SK-N-SH (cell line): ENCODE measurements at regions of chr2 and their contacts with region 1.

Region 1: GRCh38 chr2:17851731-17852585 is 26.5 kb upstream of the KCNS3 start:
- DNase-seq: peak; percentile 76
- H3K4me3 ChIP-seq: no peak overlapping the region; a peak in 1 of 4 replicates
- H3K27ac ChIP-seq: no peak overlapping the region
- H3K4me1 ChIP-seq: no peaks in the 10 kb centered on the region; a peak in 1 of 4 replicates
- H3K27me3 ChIP-seq: no peaks in the 10 kb centered on the region; the same call in 1 of the 2 replicates
- CTCF ChIP-seq: peak; percentile 95
- EP300 ChIP-seq: no peak
- RAD21 ChIP-seq: peak; percentile 98

Region 2: GRCh38 chr2:16713011-16713423 is 1138.9 kb before region 1 on chr2:
- CTCF ChIA-PET with region 1: no interaction called
- POLR2A ChIA-PET with region 1: no interaction called
- DNase-seq: no peak
- H3K4me3 ChIP-seq: no peak overlapping the region
- H3K27ac ChIP-seq: no peak overlapping the region
- H3K4me1 ChIP-seq: no peaks in the 10 kb centered on the region; a peak in 2 of 4 replicates
- H3K27me3 ChIP-seq: no peaks in the 10 kb centered on the region
- CTCF ChIP-seq: no peak
- EP300 ChIP-seq: no peak
- RAD21 ChIP-seq: no peak

Region 3: DNA sequence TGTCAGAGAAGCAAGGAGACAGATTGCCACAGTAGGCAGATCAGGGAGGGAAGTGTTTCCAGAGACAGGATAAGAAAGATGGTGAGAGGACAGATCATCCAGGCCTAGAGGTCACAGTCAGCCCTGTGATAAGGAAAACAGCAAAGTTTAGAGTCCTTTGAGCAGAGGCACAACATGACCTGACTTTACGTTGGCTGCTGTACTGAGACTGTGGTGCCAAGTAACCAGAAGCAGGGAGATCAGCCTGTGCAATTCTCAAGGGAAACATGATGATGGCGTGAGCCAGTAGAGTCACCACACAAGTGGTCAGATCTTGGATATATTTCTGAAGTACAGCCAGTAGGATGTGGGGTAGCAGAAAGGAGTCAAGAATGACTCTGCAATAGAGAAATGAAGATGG is 142.1 kb before region 1 on chr2:
- CTCF ChIA-PET with region 1: no interaction called
- POLR2A ChIA-PET with region 1: no interaction called
- DNase-seq: no peak
- H3K4me3 ChIP-seq: no peak overlapping the region
- H3K27ac ChIP-seq: no peak overlapping the region
- H3K4me1 ChIP-seq: no peaks in the 10 kb centered on the region; a peak in 1 of 4 replicates
- H3K27me3 ChIP-seq: no peaks in the 10 kb centered on the region
- CTCF ChIP-seq: no peak
- EP300 ChIP-seq: no peak
- RAD21 ChIP-seq: no peak

Region 4: DNA sequence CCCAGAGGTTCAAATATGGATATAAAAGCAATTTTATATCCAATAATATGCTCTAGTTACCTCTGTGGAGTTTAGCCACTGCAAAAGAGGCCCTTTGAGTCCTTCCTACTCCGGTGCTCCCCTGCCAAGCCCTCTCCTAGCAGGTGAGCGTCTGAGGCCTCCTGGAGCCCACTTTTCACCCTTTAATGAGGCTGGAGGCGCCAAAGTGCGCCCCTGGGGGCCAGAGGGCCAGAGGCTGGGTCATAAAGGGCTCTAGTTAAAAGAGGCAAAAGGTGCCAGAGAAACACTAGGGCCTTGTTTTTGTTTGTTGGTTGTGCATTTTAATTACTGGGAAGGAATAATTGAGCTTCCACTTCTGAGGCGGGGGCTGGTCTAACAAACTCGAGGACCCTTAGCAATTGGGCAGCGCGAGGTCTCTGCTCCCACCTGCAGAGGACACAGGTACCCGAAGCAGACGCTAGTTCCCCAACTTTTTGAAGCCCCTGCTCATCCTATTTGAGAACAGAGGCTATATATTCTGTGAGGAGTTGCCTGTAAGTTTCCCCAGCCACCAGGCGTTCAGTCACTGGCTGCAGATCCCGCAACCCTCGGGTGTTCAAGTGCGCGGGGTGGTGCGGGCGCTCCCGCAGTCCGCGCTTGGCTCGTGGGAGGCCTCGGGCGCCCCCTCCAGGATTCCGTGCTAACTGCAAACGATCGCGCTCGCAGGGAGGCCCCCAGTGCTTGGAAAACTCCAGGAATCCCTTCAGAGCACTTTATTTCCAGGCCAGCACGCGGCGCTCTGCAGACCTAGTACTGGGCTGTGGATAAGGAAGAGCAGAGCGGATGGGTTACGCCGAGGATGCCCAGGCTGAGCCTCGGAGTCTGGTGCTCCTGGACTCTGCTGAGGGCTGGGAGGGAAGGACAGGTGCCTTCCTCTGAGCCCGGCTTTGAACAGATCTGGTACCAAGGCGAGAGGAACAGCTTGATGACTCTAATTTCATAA is 21.6 kb before region 1 on chr2:
- CTCF ChIA-PET with region 1: interaction called, 43 read pairs
- POLR2A ChIA-PET with region 1: no interaction called
- DNase-seq: peak; percentile 92
- H3K4me3 ChIP-seq: peak overlapping the region; percentile 43 to 59
- H3K27ac ChIP-seq: no peak overlapping the region
- H3K4me1 ChIP-seq: peaks cover 0 to 10% of the 10 kb centered on the region in 2 experiments; a peak in 1 of 4 replicates
- H3K27me3 ChIP-seq: peaks cover 11% of the 10 kb centered on the region; the same call in 1 of the 2 replicates
- CTCF ChIP-seq: peak; percentile 94
- EP300 ChIP-seq: no peak
- RAD21 ChIP-seq: peak; percentile 79

Region 5: GRCh38 chr2:17918789-17919188 is 66.8 kb after region 1 on chr2:
- CTCF ChIA-PET with region 1: interaction called, 13 read pairs
- POLR2A ChIA-PET with region 1: no interaction called
- DNase-seq: peak; percentile 18
- H3K4me3 ChIP-seq: no peak overlapping the region
- H3K27ac ChIP-seq: no peak overlapping the region
- H3K4me1 ChIP-seq: no peaks in the 10 kb centered on the region
- H3K27me3 ChIP-seq: no peaks in the 10 kb centered on the region
- CTCF ChIP-seq: no peak
- EP300 ChIP-seq: no peak
- RAD21 ChIP-seq: peak; percentile 22; the same call in 1 of the 2 replicates

Region 6: DNA sequence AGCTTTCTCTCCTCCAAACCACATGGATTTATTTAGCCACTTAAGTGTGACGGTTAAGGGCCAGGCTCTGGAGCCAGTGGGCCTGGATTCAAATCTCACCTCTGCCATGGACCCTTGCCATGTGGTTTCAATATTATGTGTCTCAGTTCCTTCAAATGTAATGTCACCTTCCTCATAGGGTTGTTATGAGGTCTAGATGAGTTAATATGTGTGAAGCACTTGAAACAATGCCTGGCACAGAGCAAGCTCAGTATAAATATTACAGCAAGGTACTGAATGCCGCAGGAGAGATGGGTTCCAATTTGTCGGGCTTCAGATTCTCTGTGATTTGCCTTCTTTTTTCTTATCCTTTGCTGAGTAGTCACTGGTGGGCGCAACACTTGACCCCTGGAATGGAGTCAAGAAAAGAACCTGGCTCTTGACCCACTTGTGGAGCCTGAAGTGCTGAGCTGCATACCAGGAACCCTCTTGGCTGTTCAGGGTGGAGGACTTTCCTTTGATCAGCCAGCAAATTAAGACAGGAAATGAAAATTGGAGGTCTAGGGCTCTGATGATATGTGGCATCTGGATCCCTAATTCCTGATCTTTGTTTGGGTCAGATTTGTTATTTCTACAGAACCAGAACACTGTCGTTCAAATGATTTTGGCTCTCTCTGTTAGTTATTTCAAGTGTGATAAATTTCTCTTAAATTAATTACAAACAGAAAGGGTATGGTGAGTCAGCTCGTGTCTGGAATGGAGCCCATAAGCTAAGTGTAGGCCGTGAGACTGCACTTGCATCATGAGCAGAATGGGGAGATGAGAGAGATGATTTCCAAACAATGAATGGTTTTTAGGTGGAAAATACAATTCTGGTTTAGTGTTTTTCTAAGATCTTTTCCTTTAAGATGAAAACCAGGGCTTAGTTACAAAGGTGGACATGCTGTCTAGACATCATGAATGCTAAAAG is 319.5 kb after region 1 on chr2:
- CTCF ChIA-PET with region 1: interaction called, 111 read pairs
- POLR2A ChIA-PET with region 1: no interaction called
- DNase-seq: no peak
- H3K4me3 ChIP-seq: no peak overlapping the region
- H3K27ac ChIP-seq: no peak overlapping the region
- H3K4me1 ChIP-seq: no peaks in the 10 kb centered on the region
- H3K27me3 ChIP-seq: no peaks in the 10 kb centered on the region
- CTCF ChIP-seq: no peak
- EP300 ChIP-seq: no peak
- RAD21 ChIP-seq: no peak

Region 7: GRCh38 chr2:18378020-18378653 is 526.2 kb after region 1 on chr2:
- CTCF ChIA-PET with region 1: interaction called, 69 read pairs
- POLR2A ChIA-PET with region 1: no interaction called
- DNase-seq: peak; percentile 62
- H3K4me3 ChIP-seq: no peak overlapping the region; a peak in 1 of 4 replicates
- H3K27ac ChIP-seq: no peak overlapping the region
- H3K4me1 ChIP-seq: no peaks in the 10 kb centered on the region
- H3K27me3 ChIP-seq: peaks cover 12% of the 10 kb centered on the region; the same call in 1 of the 2 replicates
- CTCF ChIP-seq: peak; percentile 98
- EP300 ChIP-seq: no peak
- RAD21 ChIP-seq: peak; percentile 86